CD4-positive, alpha-beta memory T cell (primary cell): ENCODE measurements at regions of chr1 and their contacts with region 1.

Region 1: DNA sequence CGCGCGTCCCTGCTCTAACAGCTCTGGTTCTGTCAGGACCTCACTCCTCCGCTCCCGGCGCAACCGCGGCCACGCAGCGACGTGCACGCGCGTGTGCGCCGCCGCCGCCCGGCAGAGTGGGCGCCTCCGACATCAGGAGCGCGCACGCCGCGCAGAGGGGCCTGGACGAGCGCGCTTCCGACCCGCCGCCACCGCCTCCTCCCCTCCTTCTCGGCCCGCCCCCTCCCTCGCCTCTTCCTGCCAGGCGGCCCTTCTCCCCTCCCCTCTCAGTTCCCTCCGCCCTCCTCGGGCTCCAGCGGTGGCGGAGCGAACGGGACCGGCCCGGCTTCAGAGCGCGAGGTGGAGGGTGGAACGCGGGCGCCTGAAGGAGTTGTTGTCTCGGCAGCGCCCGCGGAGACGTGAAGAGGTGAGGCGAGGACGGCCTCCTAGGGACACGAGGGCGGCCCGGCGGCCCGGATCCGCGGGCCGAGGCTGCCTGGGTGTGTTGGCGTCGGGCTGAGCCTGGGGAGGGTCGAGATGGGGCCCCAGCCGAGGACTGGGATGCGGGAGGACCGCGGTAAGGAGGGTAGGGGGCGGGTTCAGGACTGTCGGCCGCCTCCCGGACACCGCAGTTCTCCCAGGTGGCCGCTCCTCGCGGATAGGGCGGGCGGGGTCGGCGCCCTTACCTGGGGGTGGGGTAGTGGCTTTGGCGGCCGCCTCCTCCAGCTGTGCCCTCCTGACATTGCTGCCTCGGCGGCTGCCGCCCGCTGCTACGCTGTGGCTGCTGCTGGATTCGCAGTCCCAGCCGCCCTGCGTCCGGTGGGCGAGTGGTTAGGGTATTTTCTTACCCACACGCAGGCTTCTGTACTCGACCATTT is at the start of gene RABGAP1L:
- DNase-seq: peak; percentile 91 to 96 (median 95)
- H3K4me3 ChIP-seq: peak within 1 kb of the TSS; percentile 88 to 95
- H3K4me3 Mint-ChIP-seq: peak within 1 kb of the TSS; percentile 94 to 99 (median 97)
- H3K27ac ChIP-seq: peak within 1 kb of the TSS; percentile 92
- H3K27ac Mint-ChIP-seq: peak within 1 kb of the TSS; percentile 92 to 99 (median 98)
- H3K4me1 ChIP-seq: peaks cover 56% of the 10 kb centered on the region
- H3K4me1 Mint-ChIP-seq: peaks cover 40 to 67% (median 52%) of the 10 kb centered on the region in 4 donors
- H3K27me3 ChIP-seq: no peaks in the 10 kb centered on the region
- H3K27me3 Mint-ChIP-seq: no peaks in the 10 kb centered on the region
- total RNA-seq, gene RABGAP1L: 113 to 114 TPM

Region 2: DNA sequence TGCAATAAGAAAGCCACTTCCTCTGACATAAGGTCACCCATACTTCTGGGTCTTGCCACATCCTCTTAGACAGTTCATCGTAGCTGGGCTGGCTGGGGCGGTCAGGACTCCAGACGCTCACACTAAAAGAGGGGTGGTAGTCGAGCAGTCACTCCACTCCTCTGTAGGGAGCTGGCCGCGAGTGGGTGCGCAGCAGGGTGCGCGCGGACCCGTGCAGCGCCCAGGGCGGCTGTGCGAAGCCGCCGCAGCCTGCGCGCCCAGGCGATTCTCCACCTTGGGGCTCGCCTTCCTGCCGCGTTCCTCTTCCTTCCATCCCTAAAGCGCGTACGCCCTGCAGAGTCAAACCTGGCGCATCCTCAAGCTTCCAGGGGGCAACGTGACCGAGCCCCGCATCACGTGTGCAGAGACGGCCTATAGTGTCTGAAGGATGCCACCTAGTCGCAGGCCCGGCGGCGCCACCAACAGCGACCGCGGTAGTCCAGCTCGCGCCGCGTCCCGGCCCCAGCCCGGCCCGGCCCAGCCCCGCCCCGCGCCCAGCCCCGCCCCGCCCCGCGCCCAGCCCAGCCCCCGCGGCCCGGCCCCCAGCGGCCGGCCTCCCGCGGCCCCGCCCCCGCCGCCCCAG is 682.7 kb before region 1 on chr1:
- CTCF ChIA-PET with region 1: no interaction called
- POLR2A ChIA-PET with region 1: interaction called, 3 read pairs
- intact Hi-C with region 1: loop called (anchors 2 kb)
- DNase-seq: peak; percentile 77 to 90 (median 84)
- H3K4me3 ChIP-seq: peak overlapping the region; percentile 93
- H3K4me3 Mint-ChIP-seq: peak overlapping the region; percentile 89 to 94 (median 91)
- H3K27ac ChIP-seq: peak overlapping the region; percentile 89
- H3K27ac Mint-ChIP-seq: peak overlapping the region; percentile 89 to 95 (median 91)
- H3K4me1 ChIP-seq: peaks cover 61% of the 10 kb centered on the region
- H3K4me1 Mint-ChIP-seq: peaks cover 38 to 68% (median 55%) of the 10 kb centered on the region in 4 donors
- H3K27me3 ChIP-seq: no peaks in the 10 kb centered on the region
- H3K27me3 Mint-ChIP-seq: no peaks in the 10 kb centered on the region

Region 3: DNA sequence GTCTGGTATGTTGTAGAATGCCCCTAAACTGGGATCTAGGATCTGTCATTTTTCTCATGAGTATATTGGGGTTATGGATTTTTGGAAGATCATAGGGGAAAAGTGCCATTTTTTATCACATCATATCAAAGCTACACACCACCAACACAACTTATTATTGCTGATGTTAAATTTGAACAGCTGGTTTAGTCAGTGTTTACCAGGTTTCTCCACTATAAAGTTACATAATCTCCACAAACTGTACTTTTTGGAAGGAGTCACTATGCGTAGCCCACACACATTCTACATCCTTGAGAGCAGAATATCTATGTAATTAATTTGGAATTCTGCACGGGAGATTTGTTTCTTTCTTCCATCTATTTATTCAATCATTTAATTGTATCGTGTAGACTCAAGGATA is 172.5 kb before region 1 on chr1:
- CTCF ChIA-PET with region 1: no interaction called
- POLR2A ChIA-PET with region 1: no interaction called
- intact Hi-C with region 1: no loop called
- DNase-seq: no peak
- H3K4me3 ChIP-seq: no peak overlapping the region
- H3K4me3 Mint-ChIP-seq: no peak overlapping the region
- H3K27ac ChIP-seq: no peak overlapping the region
- H3K27ac Mint-ChIP-seq: peak overlapping the region in 2 of 7 donors; percentile 35 to 72
- H3K4me1 ChIP-seq: no peaks in the 10 kb centered on the region
- H3K4me1 Mint-ChIP-seq: peaks cover 5 to 12% (median 7%) of the 10 kb centered on the region in 4 donors
- H3K27me3 ChIP-seq: no peaks in the 10 kb centered on the region
- H3K27me3 Mint-ChIP-seq: no peaks in the 10 kb centered on the region

Region 4: DNA sequence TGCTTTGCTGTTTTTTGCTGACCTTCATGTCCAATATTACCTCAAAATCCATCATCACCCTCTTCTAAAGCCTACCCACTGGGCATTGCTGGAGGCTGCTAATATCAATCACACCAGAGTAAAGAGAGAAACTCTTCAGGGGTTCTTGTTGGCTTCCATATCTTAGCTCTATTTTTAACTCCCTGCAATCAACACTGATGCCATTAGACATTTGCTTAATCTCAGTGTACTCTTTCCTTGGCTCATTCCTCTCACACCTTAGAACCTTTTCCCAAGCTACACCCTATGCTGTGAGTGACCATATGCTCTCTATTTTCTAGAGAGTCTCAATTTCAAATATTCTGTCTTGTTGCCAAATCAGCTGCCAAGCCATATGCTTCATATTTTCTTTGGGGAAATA is 40.7 kb before region 1 on chr1:
- CTCF ChIA-PET with region 1: no interaction called
- POLR2A ChIA-PET with region 1: no interaction called
- intact Hi-C with region 1: no loop called
- DNase-seq: no peak
- H3K4me3 ChIP-seq: no peak overlapping the region
- H3K4me3 Mint-ChIP-seq: no peak overlapping the region
- H3K27ac ChIP-seq: no peak overlapping the region
- H3K27ac Mint-ChIP-seq: no peak overlapping the region
- H3K4me1 ChIP-seq: no peaks in the 10 kb centered on the region
- H3K4me1 Mint-ChIP-seq: peaks cover 0 to 3% (median 2%) of the 10 kb centered on the region in 4 donors
- H3K27me3 ChIP-seq: no peaks in the 10 kb centered on the region
- H3K27me3 Mint-ChIP-seq: peaks cover 0 to 3% of the 10 kb centered on the region in 2 donors

Region 5: DNA sequence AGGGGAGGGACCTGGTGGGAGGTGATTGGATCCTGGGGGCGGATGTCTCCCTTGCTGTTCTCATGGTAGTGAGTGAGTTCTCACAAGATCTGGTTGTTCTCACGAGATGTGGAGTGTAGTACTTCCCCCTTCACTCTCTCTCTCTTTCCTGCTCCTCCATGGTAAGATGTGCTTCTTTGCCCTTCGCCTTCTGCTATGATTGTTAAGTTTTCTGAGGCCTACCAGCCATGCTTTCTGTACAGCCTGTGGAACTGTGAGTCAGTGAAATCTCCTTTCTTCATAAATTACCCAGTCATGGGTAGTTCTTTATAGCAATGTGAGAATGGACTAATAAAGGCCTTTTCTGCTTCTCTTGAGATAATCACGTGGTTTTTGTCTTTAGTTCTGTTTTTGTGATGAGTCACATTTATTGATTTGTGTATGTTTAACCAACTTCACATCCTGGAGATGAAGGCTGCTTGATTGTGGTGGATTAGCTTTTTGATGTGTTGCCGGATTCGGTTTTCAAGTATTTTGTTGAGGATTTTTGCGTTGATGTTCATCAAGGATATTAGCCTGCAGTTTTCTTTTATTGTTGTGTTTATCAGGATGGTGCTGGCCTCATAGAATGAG is 45.3 kb after region 1 on chr1:
- CTCF ChIA-PET with region 1: interaction called, 7 read pairs
- POLR2A ChIA-PET with region 1: interaction called, 4 read pairs
- intact Hi-C with region 1: loop called (anchors 2 kb)
- DNase-seq: peak; percentile 45 to 65 (median 55)
- H3K4me3 ChIP-seq: no peak overlapping the region
- H3K4me3 Mint-ChIP-seq: peak overlapping the region; percentile 17 to 81 (median 54)
- H3K27ac ChIP-seq: peak overlapping the region; percentile 22
- H3K27ac Mint-ChIP-seq: peak overlapping the region; percentile 69 to 94 (median 86)
- H3K4me1 ChIP-seq: peaks cover 42% of the 10 kb centered on the region
- H3K4me1 Mint-ChIP-seq: peaks cover 43 to 67% (median 56%) of the 10 kb centered on the region in 4 donors
- H3K27me3 ChIP-seq: no peaks in the 10 kb centered on the region
- H3K27me3 Mint-ChIP-seq: no peaks in the 10 kb centered on the region

Region 6: DNA sequence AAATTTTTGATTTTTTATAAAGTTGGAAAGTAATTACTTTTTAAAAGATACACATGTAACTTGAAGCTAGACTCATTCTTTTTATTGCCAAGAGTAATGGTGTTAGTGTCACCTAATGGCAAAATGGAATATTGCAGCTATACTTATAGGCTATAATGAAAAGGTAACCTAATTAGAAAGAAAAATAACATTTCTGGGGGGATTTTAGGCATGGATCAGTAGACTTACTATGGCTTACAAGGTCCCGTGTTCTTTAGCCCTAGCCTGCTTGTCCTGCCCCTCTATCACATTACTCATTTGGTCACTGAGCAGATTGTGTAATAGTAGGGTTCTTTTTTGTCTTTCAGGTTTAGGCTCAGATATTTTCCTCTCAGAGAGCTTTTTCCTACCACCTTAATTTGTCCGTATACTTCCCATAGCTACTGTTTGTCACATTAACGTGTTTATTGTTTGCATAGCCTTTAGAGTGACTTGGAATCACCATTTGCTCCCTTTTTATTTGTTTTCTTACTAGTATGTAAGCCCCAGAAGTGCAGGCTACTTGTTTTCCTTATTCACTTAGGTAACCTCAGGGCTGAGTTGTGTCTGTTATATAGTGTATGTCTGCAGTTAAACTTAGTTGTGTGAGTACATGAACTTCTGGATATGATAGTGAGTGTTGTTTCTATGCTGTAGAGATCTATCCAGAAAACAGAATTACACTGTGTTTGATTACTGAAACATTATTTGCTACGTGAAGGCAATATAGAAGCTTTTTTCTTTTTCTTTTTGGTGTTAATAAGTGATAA is 58.5 kb after region 1 on chr1:
- CTCF ChIA-PET with region 1: interaction called, 3 read pairs
- POLR2A ChIA-PET with region 1: no interaction called
- intact Hi-C with region 1: loop called (anchors 2 kb)
- DNase-seq: peak in 4 of 5 donors; percentile 37 to 45 (median 40)
- H3K4me3 ChIP-seq: no peak overlapping the region
- H3K4me3 Mint-ChIP-seq: no peak overlapping the region
- H3K27ac ChIP-seq: no peak overlapping the region
- H3K27ac Mint-ChIP-seq: no peak overlapping the region
- H3K4me1 ChIP-seq: no peaks in the 10 kb centered on the region
- H3K4me1 Mint-ChIP-seq: peaks cover 0 to 5% (median 2%) of the 10 kb centered on the region in 4 donors
- H3K27me3 ChIP-seq: no peaks in the 10 kb centered on the region
- H3K27me3 Mint-ChIP-seq: no peaks in the 10 kb centered on the region